IMR-90 (cell line): ENCODE measurements at regions of chr2 and their contacts with region 1.

Region 1: DNA sequence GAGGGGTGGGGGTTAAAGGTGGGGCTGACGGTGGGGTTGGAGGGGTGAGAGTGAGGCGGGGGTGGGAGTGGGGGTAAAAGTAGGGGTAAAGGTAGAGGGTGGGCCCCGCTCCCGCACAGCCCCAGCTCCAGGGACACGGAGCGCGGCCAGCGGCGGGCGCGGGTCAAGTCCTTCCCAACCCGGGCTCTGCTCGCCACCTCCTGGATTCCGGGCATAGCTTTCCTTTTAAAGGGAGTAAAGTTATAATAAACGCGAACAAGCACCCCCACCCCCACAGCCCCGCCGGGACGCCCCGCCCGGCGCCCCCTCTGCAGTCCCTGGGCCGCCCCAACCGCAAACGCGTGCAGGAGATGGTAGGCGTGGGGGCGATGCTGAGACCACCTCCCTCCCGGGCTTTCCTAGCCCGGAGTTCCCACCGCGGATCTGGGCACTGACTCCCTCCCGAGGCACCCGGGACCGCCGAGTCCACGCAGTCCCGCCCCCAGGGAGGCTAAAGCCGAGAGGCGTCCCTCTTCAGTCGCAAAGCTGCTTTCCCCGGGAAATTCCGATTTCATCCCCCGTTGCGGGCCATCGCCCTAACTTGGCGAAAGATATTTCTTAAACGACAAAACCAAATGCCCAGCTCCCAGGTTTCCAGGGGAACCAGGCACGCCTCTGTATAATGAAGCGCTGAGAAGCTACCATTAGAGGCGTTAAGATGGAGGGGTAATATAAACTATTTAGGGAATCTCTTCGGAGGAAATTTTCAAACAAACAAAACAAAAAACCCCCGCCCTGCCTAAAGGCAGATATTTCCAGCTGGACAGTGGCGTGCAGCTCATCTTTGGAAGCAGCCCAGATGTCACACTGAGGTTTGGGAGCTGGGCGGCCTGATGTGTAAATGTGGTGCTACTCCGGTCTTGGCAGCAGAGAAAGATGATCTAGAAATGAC is at the start of gene LIMS2:
- DNase-seq: peak; percentile 33
- ATAC-seq: peak; percentile 77
- H3K4me3 ChIP-seq: peak within 1 kb of the TSS; percentile 84
- H3K27ac ChIP-seq: peak within 1 kb of the TSS; percentile 71
- H3K4me1 ChIP-seq: peaks cover 7% of the 10 kb centered on the region; the same call in 1 of the 2 replicates
- H3K27me3 ChIP-seq: peaks cover 19% of the 10 kb centered on the region
- CTCF ChIP-seq: peak; percentile 30; the same call in 1 of the 2 replicates
- POLR2A ChIP-seq: no peak
- RAD21 ChIP-seq: peak; percentile 40
- total RNA-seq, gene LIMS2: 1.1 and 1.3 TPM in 2 replicates

Region 2: GRCh38 chr2:127508631-127509034 is 167.0 kb before region 1 on chr2:
- CTCF ChIA-PET with region 1: no interaction called
- POLR2A ChIA-PET with region 1: no interaction called
- dilution Hi-C with region 1: no loop called
- in situ Hi-C with region 1: no loop called
- intact Hi-C with region 1: loop called (anchors 2 kb)
- DNase-seq: peak; percentile 99
- ATAC-seq: peak; percentile 88
- H3K4me3 ChIP-seq: no peak overlapping the region
- H3K27ac ChIP-seq: no peak overlapping the region
- H3K4me1 ChIP-seq: peaks cover 13% of the 10 kb centered on the region
- H3K27me3 ChIP-seq: no peaks in the 10 kb centered on the region
- CTCF ChIP-seq: no peak
- POLR2A ChIP-seq: no peak
- RAD21 ChIP-seq: no peak